Activated CD4-positive, alpha-beta memory T cell treated with anti-CD3 and anti-CD28 coated beads for 36 hours (primary cell): ENCODE measurements at regions of chr15 and their contacts with region 1.

Region 1: DNA sequence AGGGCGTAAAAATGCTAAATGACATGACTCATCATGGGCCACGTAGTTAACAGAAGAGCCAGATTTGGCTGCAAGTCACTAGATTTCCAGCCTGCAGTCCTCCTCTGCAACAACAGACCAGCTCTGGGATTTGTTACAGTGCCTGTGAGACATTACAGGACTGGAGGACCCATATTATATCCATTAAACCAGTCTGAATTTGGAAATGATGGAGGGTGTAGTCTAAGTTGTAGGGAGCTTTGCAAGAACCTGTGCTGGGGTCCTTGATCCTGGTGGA is 10.8 kb downstream of the ZNF774 start:
- DNase-seq: no peak
- H3K4me3 Mint-ChIP-seq: no peak overlapping the region
- H3K27ac Mint-ChIP-seq: peak overlapping the region; percentile 39
- H3K4me1 Mint-ChIP-seq: peaks cover 24% of the 10 kb centered on the region
- H3K27me3 Mint-ChIP-seq: no peaks in the 10 kb centered on the region

Region 2: DNA sequence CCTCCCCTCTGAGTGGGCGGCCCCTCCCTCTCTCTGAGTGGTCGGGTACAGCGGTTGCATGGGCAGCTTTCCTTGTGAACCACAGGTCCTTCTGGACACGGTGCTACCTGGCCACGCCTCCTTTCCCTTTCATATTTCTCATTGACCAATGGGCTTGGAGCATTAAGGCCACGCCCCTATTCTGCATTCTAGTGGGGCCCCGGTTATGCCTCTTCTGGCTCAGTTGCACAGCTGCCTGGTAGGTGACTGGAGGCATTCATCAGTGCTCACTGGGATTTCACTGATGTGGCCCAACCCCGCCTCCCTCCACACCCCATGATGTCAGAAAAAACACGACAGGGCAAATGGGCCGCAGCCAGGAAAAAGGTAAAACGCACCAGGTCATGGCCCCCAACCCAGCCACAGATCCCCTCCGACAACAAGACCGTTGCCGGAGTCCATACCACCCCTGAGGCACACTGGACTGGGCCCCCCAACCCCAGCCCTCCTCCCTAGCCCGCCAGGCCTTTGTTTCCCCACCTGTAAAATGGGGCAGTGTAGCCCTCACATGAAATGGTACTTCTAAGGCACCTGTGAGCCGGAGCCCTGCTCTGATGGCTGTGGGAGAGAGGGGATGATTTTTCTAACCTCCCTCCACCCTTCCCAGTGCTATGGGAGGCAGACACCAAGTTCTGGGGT is 71.1 kb before region 1 on chr15:
- CTCF ChIA-PET with region 1: interaction called, 10 read pairs
- POLR2A ChIA-PET with region 1: no interaction called
- intact Hi-C with region 1: no loop called
- DNase-seq: peak; percentile 33
- H3K4me3 Mint-ChIP-seq: no peak overlapping the region
- H3K27ac Mint-ChIP-seq: no peak overlapping the region
- H3K4me1 Mint-ChIP-seq: peaks cover 5% of the 10 kb centered on the region
- H3K27me3 Mint-ChIP-seq: no peaks in the 10 kb centered on the region

Region 3: DNA sequence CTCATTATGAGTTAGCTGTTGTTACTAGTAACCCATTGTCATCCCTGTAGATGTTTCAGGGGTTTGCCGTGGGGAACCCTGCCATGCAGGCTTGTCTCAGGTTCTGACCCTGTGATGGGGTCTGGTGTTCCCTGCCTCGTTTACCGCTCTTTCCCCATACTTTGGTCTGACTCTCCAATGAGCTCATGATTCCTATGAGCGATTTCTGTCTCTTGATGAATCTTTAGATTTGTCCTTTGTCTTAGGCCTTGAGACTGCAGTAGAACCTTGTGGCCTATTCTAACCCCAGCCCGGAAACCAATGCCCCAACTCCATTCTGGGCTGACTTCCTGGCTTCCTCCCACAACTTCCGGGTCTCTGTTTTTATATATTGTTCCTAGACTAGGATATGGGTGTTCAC is 13.9 kb after region 1 on chr15:
- CTCF ChIA-PET with region 1: interaction called, 10 read pairs
- POLR2A ChIA-PET with region 1: interaction called, 5 read pairs
- intact Hi-C with region 1: no loop called
- DNase-seq: peak; percentile 78
- H3K4me3 Mint-ChIP-seq: peak overlapping the region; percentile 42
- H3K27ac Mint-ChIP-seq: peak overlapping the region; percentile 91
- H3K4me1 Mint-ChIP-seq: peaks cover 34% of the 10 kb centered on the region
- H3K27me3 Mint-ChIP-seq: no peaks in the 10 kb centered on the region

Region 4: GRCh38 chr15:90400406-90401314 is 37.8 kb after region 1 on chr15:
- CTCF ChIA-PET with region 1: interaction called, 12 read pairs
- POLR2A ChIA-PET with region 1: no interaction called
- intact Hi-C with region 1: no loop called
- DNase-seq: peak; percentile 72
- H3K4me3 Mint-ChIP-seq: peak overlapping the region; percentile 57
- H3K27ac Mint-ChIP-seq: peak overlapping the region; percentile 91
- H3K4me1 Mint-ChIP-seq: peaks cover 66% of the 10 kb centered on the region
- H3K27me3 Mint-ChIP-seq: no peaks in the 10 kb centered on the region

Region 5: DNA sequence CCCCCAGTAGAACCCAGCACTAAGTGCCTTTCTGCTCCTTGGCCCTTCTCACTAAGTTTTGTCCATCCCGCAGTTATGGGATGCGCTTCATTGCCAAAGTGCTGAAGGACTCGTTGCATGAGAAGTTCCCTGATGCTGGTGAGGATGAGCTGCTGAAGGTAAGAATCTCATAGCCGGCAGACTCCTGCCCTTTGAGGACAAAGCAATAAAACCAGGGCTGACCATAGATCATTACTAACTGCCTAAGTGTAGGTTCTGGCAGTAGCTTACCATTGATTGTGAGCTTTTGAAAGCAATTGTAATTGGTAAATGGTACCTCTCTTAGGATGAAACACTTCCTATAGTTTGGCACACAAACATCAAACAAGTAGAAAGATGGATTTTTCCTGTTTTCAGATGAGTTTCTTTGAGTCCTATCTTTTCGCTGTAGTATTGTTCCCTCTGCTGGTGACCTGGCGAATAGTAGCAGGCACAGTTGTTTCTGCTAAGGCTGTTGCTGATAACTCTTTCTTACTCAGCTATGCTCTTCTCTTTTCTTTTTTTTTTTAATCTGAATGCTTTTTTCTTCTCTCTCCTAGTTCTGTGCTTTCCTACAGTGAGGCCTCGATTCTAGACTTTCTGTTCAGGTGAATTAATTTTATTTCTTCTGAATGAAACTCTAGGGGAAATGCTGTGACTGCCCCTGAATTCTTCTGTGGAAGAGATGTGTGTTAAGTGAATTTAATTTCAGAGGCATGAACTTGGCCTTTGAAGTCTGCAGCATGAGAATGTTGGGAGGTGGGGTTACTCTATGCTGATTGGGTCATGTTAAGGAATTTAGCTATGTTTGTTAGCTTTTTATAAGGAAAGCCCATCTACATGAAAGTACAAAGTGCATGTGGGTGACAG is 119.5 kb after region 1 on chr15:
- CTCF ChIA-PET with region 1: interaction called, 61 read pairs
- POLR2A ChIA-PET with region 1: no interaction called
- intact Hi-C with region 1: loop called (anchors 1 kb)
- DNase-seq: peak; percentile 62
- H3K4me3 Mint-ChIP-seq: no peak overlapping the region
- H3K27ac Mint-ChIP-seq: peak overlapping the region; percentile 9
- H3K4me1 Mint-ChIP-seq: peaks cover 30% of the 10 kb centered on the region
- H3K27me3 Mint-ChIP-seq: no peaks in the 10 kb centered on the region

Region 6: GRCh38 chr15:90583471-90584252 is 220.8 kb after region 1 on chr15:
- CTCF ChIA-PET with region 1: no interaction called
- POLR2A ChIA-PET with region 1: no interaction called
- intact Hi-C with region 1: no loop called
- DNase-seq: no peak
- H3K4me3 Mint-ChIP-seq: no peak overlapping the region
- H3K27ac Mint-ChIP-seq: peak overlapping the region; percentile 7
- H3K4me1 Mint-ChIP-seq: peaks cover 55% of the 10 kb centered on the region
- H3K27me3 Mint-ChIP-seq: no peaks in the 10 kb centered on the region